Mammary epithelial cell (primary cell): ENCODE measurements at regions of chr13 and their contacts with region 1.

Region 1: GRCh38 chr13:23715762-23716235 is 145.6 kb downstream of the TNFRSF19 start:
- DNase-seq: no peak
- H3K4me3 ChIP-seq: no peak overlapping the region
- H3K27ac ChIP-seq: no peak overlapping the region
- H3K4me1 ChIP-seq: no peaks in the 10 kb centered on the region
- H3K27me3 ChIP-seq: no peaks in the 10 kb centered on the region
- CTCF ChIP-seq: peak in 1 of 2 donors; percentile 48

Region 2: GRCh38 chr13:23466144-23467002 is 249.4 kb before region 1 on chr13:
- CTCF ChIA-PET with region 1: no interaction called
- dilution Hi-C with region 1: no loop called
- in situ Hi-C with region 1: no loop called
- intact Hi-C with region 1: loop called (anchors 2 kb)
- DNase-seq: peak; percentile 75
- H3K4me3 ChIP-seq: peak overlapping the region; percentile 40 to 48 (median 45)
- H3K27ac ChIP-seq: no peak overlapping the region
- H3K4me1 ChIP-seq: peaks cover 9% of the 10 kb centered on the region
- H3K27me3 ChIP-seq: peaks cover 6% of the 10 kb centered on the region
- CTCF ChIP-seq: peak; percentile 44 to 59

Region 3: DNA sequence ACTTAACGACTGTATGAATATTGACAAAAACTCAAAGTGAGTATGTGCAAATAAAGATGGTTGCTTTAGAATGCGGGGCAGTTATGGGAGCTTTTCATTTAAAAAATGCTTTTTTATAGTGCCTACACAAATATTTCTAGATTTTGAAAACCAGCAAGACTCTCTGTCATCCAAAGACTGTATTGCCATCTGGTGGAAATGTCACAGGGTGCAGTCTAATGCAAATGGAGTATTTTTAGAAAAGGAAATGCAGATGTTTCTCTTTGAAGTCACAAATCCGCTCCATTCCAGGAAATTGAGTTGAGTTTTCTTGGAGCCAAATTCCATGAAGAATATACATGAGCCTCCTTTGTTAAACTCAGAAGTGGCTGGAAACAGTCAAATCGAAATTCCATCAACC is 183.8 kb after region 1 on chr13:
- CTCF ChIA-PET with region 1: no interaction called
- dilution Hi-C with region 1: no loop called
- in situ Hi-C with region 1: no loop called
- intact Hi-C with region 1: no loop called
- DNase-seq: peak; percentile 27
- H3K4me3 ChIP-seq: no peak overlapping the region
- H3K27ac ChIP-seq: no peak overlapping the region
- H3K4me1 ChIP-seq: peaks cover 12% of the 10 kb centered on the region
- H3K27me3 ChIP-seq: peaks cover 16% of the 10 kb centered on the region
- CTCF ChIP-seq: peak; percentile 65 to 68